ENCODE measurements at regions of chr11 and their contacts with region 1.

Region 1: DNA sequence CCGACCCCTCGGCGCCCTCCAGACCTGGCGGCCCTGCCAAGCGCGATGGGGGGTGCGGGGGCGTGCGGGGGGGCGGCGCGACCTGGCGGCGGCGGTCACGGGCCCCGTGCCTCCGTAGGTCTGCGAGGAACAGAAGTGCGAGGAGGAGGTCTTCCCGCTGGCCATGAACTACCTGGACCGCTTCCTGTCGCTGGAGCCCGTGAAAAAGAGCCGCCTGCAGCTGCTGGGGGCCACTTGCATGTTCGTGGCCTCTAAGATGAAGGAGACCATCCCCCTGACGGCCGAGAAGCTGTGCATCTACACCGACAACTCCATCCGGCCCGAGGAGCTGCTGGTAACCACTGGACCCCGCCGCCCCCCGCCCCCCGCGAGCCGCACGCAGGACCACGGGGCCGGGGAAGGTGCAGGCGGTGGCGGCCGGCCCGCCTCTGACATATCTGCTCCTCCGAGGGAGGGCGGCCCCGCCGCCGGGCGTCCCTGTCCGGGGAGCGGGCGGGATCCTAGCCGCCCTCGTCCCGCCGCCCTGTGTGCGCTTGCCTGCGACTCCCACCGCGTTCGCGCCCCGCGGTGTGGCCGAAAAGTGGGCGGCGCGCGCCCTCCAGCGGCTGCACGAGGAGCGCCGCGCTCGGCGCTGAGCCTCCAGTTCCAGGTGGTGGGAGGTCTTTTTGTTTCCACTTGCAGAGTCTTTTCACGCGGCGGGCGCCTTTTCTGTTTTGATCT is 2.1 kb downstream of the CCND1 start:
- DNase-seq: peak; percentile 80
- ATAC-seq: peak; percentile 90
- H3K4me3 Mint-ChIP-seq: peak overlapping the region; percentile 67
- H3K27ac Mint-ChIP-seq: no peak overlapping the region
- H3K4me1 Mint-ChIP-seq: peaks cover 12% of the 10 kb centered on the region
- H3K27me3 Mint-ChIP-seq: peaks cover 24% of the 10 kb centered on the region

Region 2: GRCh38 chr11:69101115-69101791 is 541.8 kb before region 1 on chr11:
- CTCF ChIA-PET with region 1: interaction called, 23 read pairs
- POLR2A ChIA-PET with region 1: no interaction called
- DNase-seq: peak; percentile 71
- ATAC-seq: peak; percentile 84
- H3K4me3 Mint-ChIP-seq: no peak overlapping the region
- H3K27ac Mint-ChIP-seq: no peak overlapping the region
- H3K4me1 Mint-ChIP-seq: peaks cover 6% of the 10 kb centered on the region
- H3K27me3 Mint-ChIP-seq: peaks cover 2% of the 10 kb centered on the region

Region 3: GRCh38 chr11:69292221-69292648 is 350.8 kb before region 1 on chr11:
- CTCF ChIA-PET with region 1: interaction called, 14 read pairs
- POLR2A ChIA-PET with region 1: no interaction called
- DNase-seq: peak; percentile 68
- ATAC-seq: no peak
- H3K4me3 Mint-ChIP-seq: no peak overlapping the region
- H3K27ac Mint-ChIP-seq: no peak overlapping the region
- H3K4me1 Mint-ChIP-seq: peaks cover 33% of the 10 kb centered on the region
- H3K27me3 Mint-ChIP-seq: no peaks in the 10 kb centered on the region

Region 4: DNA sequence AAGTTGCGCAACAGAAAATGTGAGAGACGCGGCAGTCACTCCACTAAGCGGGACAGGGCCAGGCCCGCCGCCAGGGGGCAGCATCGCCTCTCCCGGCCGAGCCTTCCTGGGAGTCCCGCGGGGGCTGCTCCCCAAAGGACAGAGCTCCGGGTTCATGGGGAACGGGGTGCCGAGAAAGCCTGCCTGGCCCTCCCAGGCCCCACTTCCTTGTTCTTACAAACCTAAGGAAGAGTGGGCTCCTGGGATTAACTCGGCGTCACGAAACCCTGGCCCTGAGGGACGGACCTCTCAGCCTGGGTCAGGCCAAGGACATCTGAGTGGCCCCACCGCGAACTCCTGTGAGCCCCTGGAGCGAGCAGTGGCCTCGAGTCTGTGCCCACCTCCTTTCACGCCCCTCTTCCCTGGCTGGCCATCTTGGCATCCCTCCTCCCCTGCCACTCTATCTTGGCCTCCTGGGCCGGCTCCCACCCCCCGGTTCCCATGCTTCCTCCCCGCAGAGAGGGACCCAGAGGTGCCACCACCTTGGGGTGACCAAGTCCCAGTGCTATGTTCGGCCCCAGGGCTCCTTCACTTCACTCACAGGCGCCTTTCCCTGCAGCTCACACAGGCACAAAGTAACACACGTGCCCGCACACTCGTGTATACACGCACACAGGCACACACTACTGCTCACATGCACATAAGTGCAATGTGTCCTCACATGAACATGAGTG is 276.0 kb after region 1 on chr11:
- CTCF ChIA-PET with region 1: no interaction called
- POLR2A ChIA-PET with region 1: no interaction called
- DNase-seq: peak; percentile 71
- ATAC-seq: peak; percentile 78
- H3K4me3 Mint-ChIP-seq: no peak overlapping the region
- H3K27ac Mint-ChIP-seq: no peak overlapping the region
- H3K4me1 Mint-ChIP-seq: no peaks in the 10 kb centered on the region
- H3K27me3 Mint-ChIP-seq: peaks cover 3% of the 10 kb centered on the region